ENCODE measurements at regions of chr5 and their contacts with region 1.

Region 1: DNA sequence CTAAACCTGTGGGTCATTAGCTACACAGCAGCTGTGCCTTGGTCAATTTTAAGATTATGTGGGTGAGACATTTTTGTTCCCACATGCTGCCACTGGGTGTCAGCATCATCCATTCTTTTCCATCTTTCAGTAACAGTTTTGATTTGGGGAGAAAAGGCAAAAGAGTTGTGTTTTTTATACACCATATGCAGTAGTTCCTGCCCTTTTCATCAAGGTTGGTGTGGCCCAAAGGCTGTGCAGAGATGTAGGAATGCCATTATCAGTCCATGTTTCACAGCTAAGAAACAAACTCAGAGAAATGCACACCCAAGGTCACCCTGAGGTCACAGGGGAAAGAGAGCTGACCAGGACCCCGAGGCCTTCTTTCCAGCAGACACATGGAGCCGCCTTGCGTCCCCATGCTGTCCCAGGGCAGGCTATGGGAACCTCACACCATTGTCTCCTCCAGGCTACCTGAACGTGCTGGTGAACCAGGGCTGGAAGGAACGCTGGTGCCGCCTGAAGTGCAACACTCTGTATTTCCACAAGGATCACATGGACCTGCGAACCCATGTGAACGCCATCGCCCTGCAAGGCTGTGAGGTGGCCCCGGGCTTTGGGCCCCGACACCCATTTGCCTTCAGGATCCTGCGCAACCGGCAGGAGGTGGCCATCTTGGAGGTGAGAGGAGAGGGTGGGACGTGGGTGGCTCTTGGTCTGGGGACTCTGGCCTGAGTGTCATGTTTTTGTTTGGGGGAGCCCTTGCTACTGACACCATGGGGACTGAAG is 27.8 kb upstream of the GRPEL2 start:
- DNase-seq: peak; percentile 23
- ATAC-seq: peak; percentile 53
- H3K4me3 ChIP-seq: no peak overlapping the region
- H3K27ac ChIP-seq: no peak overlapping the region
- H3K4me1 ChIP-seq: peaks cover 11 to 22% of the 10 kb centered on the region in 2 experiments
- H3K27me3 ChIP-seq: no peaks in the 10 kb centered on the region
- CTCF ChIP-seq: peak; percentile 66 to 87 (median 72)
- POLR2A ChIP-seq: no peak
- RAD21 ChIP-seq: peak; percentile 87

Region 2: DNA sequence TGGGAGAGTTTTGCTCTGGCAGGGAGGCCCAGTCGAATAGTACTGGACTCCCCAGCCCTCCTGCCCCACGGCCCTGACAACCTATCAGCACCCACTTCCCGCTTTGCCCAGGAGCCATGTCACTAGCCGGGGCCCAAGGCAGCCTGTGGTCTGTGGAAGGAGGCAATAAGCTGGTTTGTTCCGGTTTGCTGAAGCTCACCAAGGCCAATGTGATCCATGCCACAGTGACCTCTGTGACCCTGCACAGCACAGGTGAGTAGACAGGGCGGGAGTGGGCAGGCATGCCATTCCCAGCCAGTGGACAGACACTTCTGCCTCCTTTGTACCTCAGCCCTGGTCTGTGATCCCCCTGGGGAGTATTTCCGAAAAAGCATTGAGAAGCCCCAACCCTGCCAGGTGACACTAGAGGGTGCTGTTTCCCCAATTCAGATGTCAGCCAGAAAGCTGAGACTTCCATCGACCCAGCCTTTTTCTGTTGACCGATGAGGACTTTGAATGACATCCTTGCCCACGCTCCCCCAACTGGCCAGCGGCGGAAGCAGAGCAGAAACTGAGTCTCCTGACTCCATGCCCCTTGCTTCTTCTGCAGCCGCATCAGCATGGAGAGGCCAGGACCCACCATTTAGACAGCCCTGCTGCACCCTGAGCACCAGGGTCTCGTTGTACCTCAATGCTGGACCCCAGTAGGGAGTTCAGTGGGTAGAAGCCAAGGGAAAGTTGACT is 49.9 kb after region 1 on chr5:
- CTCF ChIA-PET with region 1: interaction called, 11 read pairs
- POLR2A ChIA-PET with region 1: no interaction called
- RAD21 ChIA-PET with region 1: interaction called in 1 of 2 experiments, 5 read pairs
- intact Hi-C with region 1: loop called (anchors 1 kb)
- DNase-seq: peak; percentile 79
- ATAC-seq: peak; percentile 82
- H3K4me3 ChIP-seq: no peak overlapping the region
- H3K27ac ChIP-seq: no peak overlapping the region
- H3K4me1 ChIP-seq: peaks cover 4 to 9% of the 10 kb centered on the region in 2 experiments; a peak in 3 of 4 replicates
- H3K27me3 ChIP-seq: no peaks in the 10 kb centered on the region
- CTCF ChIP-seq: peak; percentile 93 to 97 (median 94)
- POLR2A ChIP-seq: no peak
- RAD21 ChIP-seq: peak; percentile 86

Measured in HCT116 (cell line).